ENCODE measurements at regions of chr6 and their contacts with region 1.

Region 1: GRCh38 chr6:65646544-65646943 is 60.5 kb downstream of the EYS start:
- DNase-seq: no peak
- ATAC-seq: no peak
- H3K4me3 ChIP-seq: no peak overlapping the region
- H3K27ac ChIP-seq: no peak overlapping the region
- H3K4me1 ChIP-seq: no peaks in the 10 kb centered on the region
- H3K27me3 ChIP-seq: no peaks in the 10 kb centered on the region
- CTCF ChIP-seq: no peak
- POLR2A ChIP-seq: no peak
- RAD21 ChIP-seq: no peak

Region 2: DNA sequence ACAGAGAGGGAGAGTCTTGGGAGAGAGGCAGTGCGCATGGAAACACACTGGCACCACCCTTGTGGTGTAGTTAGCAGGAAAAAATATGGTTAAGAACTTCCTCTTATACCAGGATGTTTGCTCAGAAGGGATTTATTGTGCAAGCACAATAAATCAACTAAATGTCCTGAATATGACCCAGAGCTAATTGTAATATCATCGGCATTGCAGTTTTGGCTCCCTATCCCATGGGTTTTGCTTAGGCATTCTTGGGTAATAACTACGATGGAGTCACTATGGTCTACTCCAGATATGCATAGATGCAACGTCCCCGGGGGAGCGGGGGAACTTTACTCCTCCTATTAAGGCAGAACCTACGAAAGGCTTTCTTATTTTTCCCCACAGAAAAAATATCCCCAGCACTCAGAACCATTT is 691.1 kb before region 1 on chr6:
- CTCF ChIA-PET with region 1: no interaction called
- POLR2A ChIA-PET with region 1: interaction called, 17 read pairs
- dilution Hi-C with region 1: no loop called
- in situ Hi-C with region 1: no loop called
- intact Hi-C with region 1: no loop called
- DNase-seq: no peak
- ATAC-seq: no peak
- H3K4me3 ChIP-seq: no peak overlapping the region
- H3K27ac ChIP-seq: no peak overlapping the region
- H3K4me1 ChIP-seq: no peaks in the 10 kb centered on the region
- H3K27me3 ChIP-seq: no peaks in the 10 kb centered on the region
- CTCF ChIP-seq: no peak
- POLR2A ChIP-seq: no peak
- RAD21 ChIP-seq: no peak

Measured in IMR-90 (cell line).